RWPE1 (cell line): ENCODE measurements at regions of chr11 and their contacts with region 1.

Region 1: GRCh38 chr11:68257475-68258362 is 14.1 kb downstream of the C11orf24 start:
- DNase-seq: peak; percentile 74
- H3K27ac ChIP-seq: peak overlapping the region; percentile 57
- CTCF ChIP-seq: peak; percentile 87

Region 2: GRCh38 chr11:68271781-68272608 is 14.3 kb after region 1 on chr11 and contains the start of gene C11orf24:
- CTCF ChIA-PET with region 1: interaction called, 15 read pairs
- POLR2A ChIA-PET with region 1: no interaction called
- DNase-seq: peak; percentile 98
- H3K27ac ChIP-seq: peak within 1 kb of the TSS; percentile 96
- CTCF ChIP-seq: no peak